ENCODE measurements at regions of chr17 and their contacts with region 1.

Region 1: GRCh38 chr17:27892866-27893769 is at the start of gene LYRM9:
- DNase-seq: peak; percentile 91 to 96
- ATAC-seq: peak; percentile 99 to 100 (median 100)
- H3K4me3 ChIP-seq: peak within 1 kb of the TSS; percentile 54 to 86 (median 76)
- H3K27ac ChIP-seq: peak within 1 kb of the TSS; percentile 72 to 96 (median 88)
- H3K4me1 ChIP-seq: peaks cover 0 to 28% (median 12%) of the 10 kb centered on the region in 9 donors
- H3K27me3 ChIP-seq: peaks cover 0 to 10% (median 0%) of the 10 kb centered on the region in 7 donors
- CTCF ChIP-seq: peak; percentile 83 to 99 (median 95)
- total RNA-seq, gene LYRM9: 8.7 to 13.3 (median 9.8) TPM

Region 2: DNA sequence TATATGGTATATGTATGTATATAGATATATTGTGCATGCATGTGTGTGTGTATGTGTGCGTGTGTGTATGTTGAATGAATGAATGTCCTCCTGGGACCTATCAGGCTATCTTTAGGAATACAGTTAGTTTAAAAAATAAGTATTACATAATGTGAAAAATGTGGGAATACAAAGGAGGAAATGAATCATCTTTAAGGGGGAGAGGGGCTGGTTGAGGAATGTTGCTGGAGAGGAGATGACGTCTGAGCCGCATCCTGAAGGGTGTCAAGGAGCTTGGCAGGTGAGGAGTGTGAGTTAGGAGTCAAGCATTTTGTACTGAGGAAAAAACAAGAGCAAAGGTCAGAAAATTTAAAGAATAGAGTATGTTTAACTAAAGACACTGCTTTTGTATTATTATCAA is 86.9 kb after region 1 on chr17:
- intact Hi-C with region 1: loop called in 2 of 10 experiments (anchors 5 to 10 kb)
- DNase-seq: peak in 1 of 2 donors; percentile 50
- ATAC-seq: peak; percentile 70 to 91 (median 74)
- H3K4me3 ChIP-seq: no peak overlapping the region
- H3K27ac ChIP-seq: peak overlapping the region in 5 of 10 donors; percentile 44 to 77 (median 68)
- H3K4me1 ChIP-seq: peaks cover under 1 to 43% (median 9%) of the 10 kb centered on the region in 9 donors
- H3K27me3 ChIP-seq: peaks cover 0 to 4% (median 0%) of the 10 kb centered on the region in 7 donors
- CTCF ChIP-seq: no peak

Region 3: GRCh38 chr17:28041068-28041843 is 148.1 kb after region 1 on chr17:
- intact Hi-C with region 1: loop called in 3 of 10 experiments (anchors 10 kb)
- DNase-seq: peak; percentile 99 to 100
- ATAC-seq: peak; percentile 98 to 99 (median 98)
- H3K4me3 ChIP-seq: peak overlapping the region; percentile 69 to 97 (median 94)
- H3K27ac ChIP-seq: peak overlapping the region; percentile 79 to 98 (median 96)
- H3K4me1 ChIP-seq: peaks cover 7 to 50% (median 41%) of the 10 kb centered on the region in 9 donors
- H3K27me3 ChIP-seq: no peaks in the 10 kb centered on the region
- CTCF ChIP-seq: no peak

Region 4: DNA sequence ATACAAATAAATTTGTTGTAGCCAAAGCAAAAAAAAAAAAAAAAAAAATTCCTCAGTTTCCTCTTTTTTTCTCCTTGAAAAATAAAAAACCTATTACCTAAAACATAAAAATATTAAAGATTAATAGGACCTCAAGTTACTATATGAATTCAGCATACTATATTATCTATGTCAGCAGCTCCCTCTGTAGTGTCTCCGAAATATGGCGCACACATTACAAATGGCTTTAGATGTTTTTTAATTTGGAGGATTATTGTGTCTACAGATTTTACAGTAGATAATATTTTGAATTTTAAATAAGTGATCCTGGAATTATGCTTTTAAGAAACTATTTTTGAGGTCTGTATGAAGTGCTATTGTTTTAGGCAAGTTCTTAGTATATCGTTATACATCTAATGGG is 243.8 kb after region 1 on chr17:
- intact Hi-C with region 1: loop called in 1 of 10 experiments (anchors 5 kb)
- DNase-seq: no peak
- ATAC-seq: no peak
- H3K4me3 ChIP-seq: no peak overlapping the region
- H3K27ac ChIP-seq: no peak overlapping the region
- H3K4me1 ChIP-seq: peaks cover 0 to 17% (median 0%) of the 10 kb centered on the region in 9 donors
- H3K27me3 ChIP-seq: no peaks in the 10 kb centered on the region
- CTCF ChIP-seq: no peak

Region 5: GRCh38 chr17:28180449-28180848 is 287.3 kb after region 1 on chr17:
- intact Hi-C with region 1: loop called in 1 of 10 experiments (anchors 10 kb)
- DNase-seq: no peak
- ATAC-seq: no peak
- H3K4me3 ChIP-seq: no peak overlapping the region
- H3K27ac ChIP-seq: no peak overlapping the region
- H3K4me1 ChIP-seq: peaks cover 0 to 4% (median 0%) of the 10 kb centered on the region in 9 donors
- H3K27me3 ChIP-seq: no peaks in the 10 kb centered on the region
- CTCF ChIP-seq: no peak

Region 6: DNA sequence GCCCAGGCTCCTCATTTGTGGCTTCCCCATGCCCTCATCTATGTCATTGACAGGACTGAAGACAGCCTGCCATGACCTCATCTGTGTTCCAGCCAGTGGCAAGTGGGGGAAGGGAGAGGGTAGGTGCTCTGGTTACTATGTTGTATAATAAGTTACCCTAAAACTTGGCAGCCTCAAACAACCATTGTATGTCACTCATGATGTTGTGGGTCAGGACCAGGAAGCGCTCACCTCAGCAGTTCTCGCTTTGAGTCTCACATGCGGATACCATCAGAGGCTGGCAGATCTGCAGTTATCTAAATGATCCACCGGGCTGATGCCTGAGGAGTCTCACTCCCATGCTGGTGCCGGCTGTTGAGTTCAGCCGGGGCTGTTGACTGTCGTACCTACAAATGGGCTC is 336.9 kb after region 1 on chr17:
- intact Hi-C with region 1: loop called in 1 of 10 experiments (anchors 5 kb)
- DNase-seq: no peak
- ATAC-seq: no peak
- H3K4me3 ChIP-seq: no peak overlapping the region
- H3K27ac ChIP-seq: no peak overlapping the region
- H3K4me1 ChIP-seq: peaks cover 0 to 13% (median 12%) of the 10 kb centered on the region in 9 donors
- H3K27me3 ChIP-seq: peaks cover 13 to 57% (median 53%) of the 10 kb centered on the region in 7 donors
- CTCF ChIP-seq: no peak

Region 7: DNA sequence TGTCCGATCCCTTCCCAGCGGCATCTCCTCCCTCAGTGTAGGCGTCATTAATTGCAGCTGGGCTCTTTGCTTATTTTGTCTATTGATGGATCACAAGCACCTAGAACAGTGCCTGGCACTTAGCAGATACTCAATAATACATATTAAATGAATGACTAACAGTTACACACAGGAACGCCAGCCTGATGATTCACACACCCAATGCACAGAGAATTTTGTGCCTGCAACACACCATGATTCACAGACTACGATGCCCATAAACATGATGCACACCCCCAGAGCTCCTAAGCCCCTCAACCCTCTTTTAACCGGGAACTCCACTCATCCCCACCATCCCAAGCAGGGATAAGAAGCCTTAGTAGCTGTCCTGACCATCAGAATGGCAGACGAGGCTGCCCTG is 359.3 kb after region 1 on chr17:
- intact Hi-C with region 1: loop called in 4 of 10 experiments (anchors 5 to 10 kb)
- DNase-seq: no peak
- ATAC-seq: no peak
- H3K4me3 ChIP-seq: no peak overlapping the region
- H3K27ac ChIP-seq: no peak overlapping the region
- H3K4me1 ChIP-seq: peaks cover 0 to 13% (median 9%) of the 10 kb centered on the region in 9 donors
- H3K27me3 ChIP-seq: peaks cover 0 to 45% (median 15%) of the 10 kb centered on the region in 7 donors
- CTCF ChIP-seq: no peak

Measured in heart right ventricle (tissue), 16 donors.